ENCODE measurements at regions of chr5 and their contacts with region 1.

Region 1: DNA sequence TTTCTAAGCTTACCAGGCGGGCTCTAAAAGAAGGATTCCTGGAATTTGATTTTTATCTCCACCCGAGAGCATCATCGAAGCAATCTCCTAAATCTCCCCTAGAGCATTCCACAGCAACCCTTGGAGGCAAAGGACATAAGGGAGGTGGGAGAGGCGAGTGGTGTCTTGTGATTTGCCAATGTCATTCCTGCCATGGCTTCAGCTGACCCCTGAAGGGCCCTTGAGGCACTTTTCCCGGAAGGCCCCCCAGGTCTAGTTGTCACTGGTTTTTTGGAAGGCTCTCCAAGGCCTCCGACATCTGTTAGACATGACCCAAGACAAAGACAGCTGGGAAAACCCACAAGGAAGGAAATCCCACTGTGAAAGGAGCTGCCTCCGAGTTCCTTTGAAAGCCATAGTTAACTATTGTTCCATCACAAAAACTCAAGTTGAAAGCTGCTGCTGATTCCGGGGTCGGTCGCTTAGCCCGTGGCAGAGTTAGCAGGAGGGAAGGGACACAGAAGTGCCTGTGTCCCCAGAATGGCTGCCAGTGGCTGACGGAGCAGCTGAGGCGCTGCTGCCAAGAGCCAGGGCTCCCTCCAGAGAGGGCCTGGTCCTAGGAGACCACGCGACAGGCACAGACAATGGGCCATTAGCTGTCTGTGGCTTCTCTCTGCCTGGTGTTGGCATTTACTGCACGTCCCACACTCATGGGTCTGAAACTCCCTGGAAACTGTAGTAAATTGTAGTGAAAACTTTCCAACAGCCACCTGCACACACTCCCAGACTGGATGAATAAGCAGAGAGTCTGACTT is 24.4 kb upstream of the TRIO start:
- DNase-seq: no peak
- H3K4me3 ChIP-seq: no peak overlapping the region
- H3K27ac ChIP-seq: no peak overlapping the region
- H3K4me1 ChIP-seq: no peaks in the 10 kb centered on the region
- H3K27me3 ChIP-seq: no peaks in the 10 kb centered on the region
- CTCF ChIP-seq: no peak

Region 2: DNA sequence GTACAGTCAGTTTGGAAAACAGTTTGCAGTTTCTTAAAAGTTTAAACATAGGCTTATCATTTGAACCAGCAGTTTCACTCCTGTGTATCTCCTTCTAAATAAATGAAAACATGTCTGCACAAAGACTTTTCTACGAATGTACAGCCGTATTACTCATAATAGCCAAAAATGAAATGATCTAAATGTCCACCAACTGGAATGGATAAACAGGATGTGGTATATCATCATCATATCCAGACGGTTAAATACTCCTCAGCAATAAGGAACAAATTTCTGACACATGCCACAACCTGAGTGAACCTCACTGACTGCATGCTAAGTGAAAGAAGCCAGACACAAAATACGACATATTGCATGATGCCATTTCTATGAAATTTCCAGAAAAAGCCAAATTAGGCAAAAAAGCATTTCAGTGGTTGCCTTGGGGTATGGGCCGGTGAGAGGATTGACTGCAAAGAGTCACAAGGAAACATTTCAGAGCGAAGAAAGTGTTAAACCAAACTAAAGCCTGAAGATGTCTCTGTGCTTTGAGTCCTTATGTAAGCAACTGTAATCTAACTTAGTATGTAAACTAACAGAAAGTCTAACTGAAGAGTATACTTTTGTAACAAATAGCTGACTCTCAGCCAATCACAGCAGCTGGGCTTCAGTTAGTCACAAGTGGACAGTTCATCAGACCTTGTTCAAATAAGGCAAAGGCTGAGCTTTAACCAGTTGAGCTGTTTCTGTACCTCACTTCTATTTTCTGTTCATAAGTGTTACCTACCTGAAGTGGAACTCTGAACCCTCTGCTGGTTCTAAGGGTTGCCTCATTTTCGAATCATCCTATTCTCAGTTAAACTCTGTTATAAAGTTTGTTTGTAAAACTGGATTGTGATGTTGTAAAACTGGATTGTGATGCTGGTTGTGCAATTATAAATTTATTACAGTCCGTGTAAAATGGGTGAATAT is 89.6 kb after region 1 on chr5:
- intact Hi-C with region 1: no loop called
- DNase-seq: no peak
- H3K4me3 ChIP-seq: no peak overlapping the region
- H3K27ac ChIP-seq: no peak overlapping the region
- H3K4me1 ChIP-seq: peaks cover 4 to 24% (median 11%) of the 10 kb centered on the region in 3 donors
- H3K27me3 ChIP-seq: no peaks in the 10 kb centered on the region
- CTCF ChIP-seq: no peak

Region 3: DNA sequence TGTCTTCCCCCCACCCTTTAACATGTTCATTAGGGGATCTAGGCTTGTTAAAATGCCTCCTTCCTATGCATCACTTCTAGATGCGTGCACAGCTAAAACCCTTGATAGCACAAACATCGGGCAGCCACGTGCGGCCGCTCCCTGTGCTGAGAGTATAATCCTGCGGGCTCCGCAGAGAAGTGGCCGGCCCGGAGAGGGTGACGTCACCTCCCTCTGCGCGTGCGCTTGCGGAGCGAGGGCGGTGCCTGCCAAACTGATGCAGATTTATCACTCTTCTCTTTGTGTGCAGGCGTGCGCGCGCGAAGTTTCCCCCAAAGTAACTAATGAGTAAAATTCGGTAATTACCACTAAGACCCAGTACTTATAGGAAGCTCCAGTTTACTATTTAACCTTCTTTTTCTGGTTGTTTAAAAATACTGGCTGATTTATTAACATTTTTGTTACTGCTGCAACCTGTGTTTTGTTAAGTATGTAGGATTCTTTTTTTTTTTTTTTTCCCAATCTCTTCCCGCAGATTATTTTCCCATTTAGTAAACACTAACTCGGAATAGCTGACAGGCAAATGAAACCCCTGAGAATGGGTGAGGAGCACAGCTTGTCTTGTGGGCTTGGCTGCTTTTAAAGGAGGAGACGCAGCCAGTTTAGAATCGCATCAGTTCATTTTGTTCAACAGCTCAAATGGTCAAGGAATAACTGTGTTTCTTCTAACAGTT is 146.0 kb after region 1 on chr5:
- intact Hi-C with region 1: loop called (anchors 10 kb)
- DNase-seq: peak; percentile 95 to 96 (median 96)
- H3K4me3 ChIP-seq: peak overlapping the region; percentile 42 to 54 (median 52)
- H3K27ac ChIP-seq: no peak overlapping the region
- H3K4me1 ChIP-seq: peaks cover 0 to 21% (median 20%) of the 10 kb centered on the region in 3 donors
- H3K27me3 ChIP-seq: no peaks in the 10 kb centered on the region
- CTCF ChIP-seq: no peak

Region 4: DNA sequence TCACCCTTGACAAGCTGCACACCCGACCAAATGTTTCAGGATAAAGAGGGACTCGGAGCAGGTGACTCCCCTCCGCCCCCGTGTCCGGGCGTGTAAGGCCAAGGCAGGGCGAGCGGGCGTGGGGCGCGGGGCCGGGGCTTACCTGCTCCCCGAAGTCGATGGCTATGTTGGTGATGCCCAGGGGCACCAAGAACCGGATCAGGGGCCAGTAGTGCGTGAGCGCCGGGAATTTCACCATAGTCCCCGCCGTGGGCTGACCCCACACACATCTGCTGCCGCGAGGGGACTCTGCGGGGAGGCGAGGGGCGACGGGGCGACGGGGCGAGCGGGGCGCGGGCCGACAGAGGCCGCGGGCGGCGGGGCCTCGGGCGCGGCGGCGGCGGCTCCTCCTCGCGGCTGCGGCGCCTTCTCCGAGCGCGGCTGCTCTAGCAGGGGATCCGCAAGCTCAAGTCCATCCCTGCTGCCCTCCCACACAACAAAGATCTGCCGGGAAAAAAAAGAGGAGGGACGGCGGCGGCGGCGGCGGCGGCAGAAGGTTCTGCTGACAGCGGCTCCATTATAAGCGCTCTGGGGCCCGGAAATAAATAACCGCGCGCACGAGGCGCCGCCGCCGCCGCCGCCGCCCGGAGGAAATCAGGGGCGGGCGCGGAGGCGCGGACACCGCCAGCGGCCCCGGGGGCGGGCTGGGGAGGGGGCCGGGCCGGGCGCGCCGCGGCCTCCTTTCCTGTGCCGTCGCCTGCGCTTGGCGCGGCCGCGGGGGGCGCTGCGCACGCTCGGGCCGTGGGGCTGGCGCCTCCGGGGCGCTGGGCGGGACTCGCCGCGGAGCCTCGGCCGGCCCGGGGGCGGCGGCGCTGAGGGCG is 752.7 kb after region 1 on chr5 and contains the start of gene ANKH:
- intact Hi-C with region 1: no loop called
- DNase-seq: peak; percentile 77 to 92 (median 88)
- H3K4me3 ChIP-seq: peak within 1 kb of the TSS; percentile 4 to 84 (median 66)
- H3K27ac ChIP-seq: peak within 1 kb of the TSS; percentile 80 to 81
- H3K4me1 ChIP-seq: peaks cover 0 to 4% (median 0%) of the 10 kb centered on the region in 3 donors
- H3K27me3 ChIP-seq: no peaks in the 10 kb centered on the region
- CTCF ChIP-seq: peak; percentile 41
- total RNA-seq, gene ANKH: 44.6 TPM